AG04450 (cell line): ENCODE measurements at regions of chr17 and their contacts with region 1.

Region 1: GRCh38 chr17:49567871-49568694 is 7.6 kb upstream of the NXPH3 start:
- DNase-seq: peak; percentile 16
- H3K4me3 ChIP-seq: peak overlapping the region; percentile 45
- H3K27ac ChIP-seq: no peak overlapping the region
- H3K27me3 ChIP-seq: peaks cover 32% of the 10 kb centered on the region
- CTCF ChIP-seq: peak; percentile 91

Region 2: GRCh38 chr17:49677933-49678847 is 110.1 kb after region 1 on chr17 and contains the start of gene SPOP:
- CTCF ChIA-PET with region 1: interaction called, 8 read pairs
- POLR2A ChIA-PET with region 1: interaction called, 10 read pairs
- DNase-seq: peak; percentile 99
- H3K4me3 ChIP-seq: peak within 1 kb of the TSS; percentile 78
- H3K27ac ChIP-seq: peak within 1 kb of the TSS; percentile 83
- H3K27me3 ChIP-seq: no peaks in the 10 kb centered on the region
- CTCF ChIP-seq: no peak
- polyA plus RNA-seq, gene SPOP: 51.6 and 52.1 TPM in 2 replicates

Region 3: DNA sequence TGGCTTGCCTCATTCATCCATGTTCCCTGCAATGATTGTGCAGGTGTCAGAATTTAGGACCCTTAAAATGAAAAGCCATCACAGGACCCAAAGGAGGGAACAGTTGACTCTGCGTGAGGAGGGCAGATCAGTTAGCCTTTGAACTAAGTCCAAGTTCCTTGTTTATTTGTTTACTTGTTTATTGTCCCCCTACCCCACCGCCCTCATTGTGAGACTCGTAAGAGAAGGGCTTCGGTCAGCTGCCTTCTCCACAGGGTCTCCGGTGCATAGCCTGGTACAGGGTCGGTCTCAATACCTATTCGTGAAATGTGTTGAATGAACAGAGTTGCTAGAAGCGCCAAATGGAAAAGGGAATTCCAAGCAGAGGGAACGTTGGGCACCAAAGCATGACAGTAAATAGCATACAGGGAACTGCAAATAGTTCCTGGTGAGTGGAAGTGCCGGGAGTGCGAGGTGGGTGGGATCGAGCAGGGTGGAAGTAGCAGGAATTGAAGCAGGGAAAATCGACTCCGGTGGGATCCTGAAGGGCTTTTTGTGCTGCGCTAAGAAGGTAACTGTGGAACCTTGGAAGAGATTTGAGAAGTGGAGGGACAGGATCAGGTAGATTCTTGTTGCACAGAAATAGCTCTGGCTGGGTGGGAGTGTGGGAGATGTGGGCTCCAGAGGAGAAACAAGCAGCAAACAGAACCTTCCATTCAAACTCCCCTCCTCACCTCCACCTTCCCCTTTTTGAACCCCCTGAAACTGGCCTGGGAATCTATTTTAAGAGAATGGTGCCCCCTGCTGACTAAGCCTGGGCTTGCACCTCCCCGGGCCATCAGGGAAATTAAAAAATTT is 127.0 kb after region 1 on chr17:
- CTCF ChIA-PET with region 1: interaction called, 99 read pairs
- POLR2A ChIA-PET with region 1: no interaction called
- DNase-seq: no peak
- H3K4me3 ChIP-seq: no peak overlapping the region
- H3K27ac ChIP-seq: no peak overlapping the region
- H3K27me3 ChIP-seq: no peaks in the 10 kb centered on the region
- CTCF ChIP-seq: peak; percentile 95

Region 4: DNA sequence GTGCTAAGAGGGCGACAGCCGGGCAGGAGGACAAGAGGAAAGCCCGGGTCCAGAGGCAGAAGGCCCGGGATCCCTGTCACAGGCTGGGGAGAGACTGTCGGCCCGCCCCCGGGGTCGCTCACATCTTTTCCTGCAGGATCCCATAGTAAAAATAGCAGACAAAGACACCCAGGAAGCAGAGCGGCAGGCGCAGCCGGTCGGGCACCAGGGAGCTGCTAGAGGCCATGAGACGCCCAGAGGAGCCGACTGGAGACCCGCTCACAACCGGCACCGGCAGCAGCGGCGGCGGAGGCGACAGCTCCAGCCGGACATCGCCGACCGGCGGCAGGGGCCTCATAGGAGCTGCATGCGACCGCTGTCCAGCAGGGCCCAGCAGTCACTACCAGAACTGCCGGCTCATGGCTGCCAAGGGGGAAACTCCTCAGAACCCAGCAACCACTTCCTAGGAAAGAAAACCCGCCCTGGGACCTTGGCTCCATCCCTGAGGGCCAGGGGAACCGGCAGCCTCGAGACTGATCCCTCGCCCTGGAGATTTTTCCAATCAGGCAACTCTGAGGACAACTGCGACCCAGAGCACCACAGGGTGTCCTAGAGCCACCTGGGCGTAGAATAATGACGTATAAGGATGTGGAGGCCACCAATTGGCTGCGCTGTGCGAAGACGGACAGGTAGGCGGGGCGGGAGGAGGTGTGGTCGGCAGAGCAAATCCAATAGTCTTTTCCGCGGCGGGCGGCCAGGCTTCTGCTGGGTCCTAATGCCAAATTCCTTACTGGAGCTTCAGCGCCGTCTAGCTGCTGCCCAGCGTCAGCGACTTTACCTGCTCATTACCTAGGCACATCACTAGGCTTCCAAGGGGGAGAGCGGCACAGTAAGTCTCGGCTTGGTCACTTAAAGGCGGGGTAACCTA is 139.8 kb after region 1 on chr17 and contains the start of gene SLC35B1:
- CTCF ChIA-PET with region 1: interaction called, 15 read pairs
- POLR2A ChIA-PET with region 1: interaction called, 4 read pairs
- DNase-seq: peak; percentile 97
- H3K4me3 ChIP-seq: peak within 1 kb of the TSS; percentile 95
- H3K27ac ChIP-seq: peak within 1 kb of the TSS; percentile 92
- H3K27me3 ChIP-seq: no peaks in the 10 kb centered on the region
- CTCF ChIP-seq: peak; percentile 94
- polyA plus RNA-seq, gene SLC35B1: 99.1 and 109 TPM in 2 replicates

Region 5: GRCh38 chr17:49880291-49881053 is 312.4 kb after region 1 on chr17:
- CTCF ChIA-PET with region 1: no interaction called
- POLR2A ChIA-PET with region 1: no interaction called
- DNase-seq: peak; percentile 13
- H3K4me3 ChIP-seq: no peak overlapping the region
- H3K27ac ChIP-seq: no peak overlapping the region
- H3K27me3 ChIP-seq: peaks cover 57% of the 10 kb centered on the region
- CTCF ChIP-seq: peak; percentile 93